Activated B cell treated with CpG ODN at 0.5 μM for 24 hours (primary cell): ENCODE measurements at regions of chr9 and their contacts with region 1.

Region 1: GRCh38 chr9:71628247-71628646 is 140.1 kb downstream of the CEMIP2 start:
- DNase-seq: no peak
- ATAC-seq: no peak
- H3K4me3 Mint-ChIP-seq: no peak overlapping the region
- H3K27ac Mint-ChIP-seq: no peak overlapping the region
- H3K4me1 Mint-ChIP-seq: no peaks in the 10 kb centered on the region
- H3K27me3 Mint-ChIP-seq: peaks cover 4% of the 10 kb centered on the region
- CTCF ChIP-seq: no peak

Region 2: GRCh38 chr9:71703172-71703872 is 75.1 kb after region 1 on chr9:
- CTCF ChIA-PET with region 1: no interaction called
- POLR2A ChIA-PET with region 1: no interaction called
- intact Hi-C with region 1: loop called (anchors 5 kb)
- DNase-seq: no peak
- ATAC-seq: no peak
- H3K4me3 Mint-ChIP-seq: no peak overlapping the region
- H3K27ac Mint-ChIP-seq: no peak overlapping the region
- H3K4me1 Mint-ChIP-seq: no peaks in the 10 kb centered on the region
- H3K27me3 Mint-ChIP-seq: no peaks in the 10 kb centered on the region
- CTCF ChIP-seq: no peak

Region 3: DNA sequence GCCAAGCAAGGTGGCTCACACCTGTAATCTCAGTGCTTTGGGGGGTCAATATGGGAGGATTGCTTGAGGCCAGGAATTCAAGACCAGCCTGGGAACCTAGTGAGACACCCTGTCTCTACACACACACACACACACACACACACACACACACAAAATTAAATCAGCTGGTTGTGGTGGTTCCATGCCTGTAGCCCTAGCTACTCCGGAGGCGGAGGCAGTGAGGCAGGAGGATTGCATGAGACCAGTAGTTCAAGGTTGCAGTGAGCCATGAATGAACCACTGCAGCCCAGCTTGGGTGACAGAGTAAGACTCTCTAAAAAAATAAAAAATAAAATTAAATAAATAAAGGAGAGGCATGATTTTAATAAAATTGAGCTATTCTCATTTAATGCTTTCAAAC is 127.0 kb after region 1 on chr9:
- CTCF ChIA-PET with region 1: no interaction called
- POLR2A ChIA-PET with region 1: interaction called, 10 read pairs
- intact Hi-C with region 1: no loop called
- DNase-seq: no peak
- ATAC-seq: no peak
- H3K4me3 Mint-ChIP-seq: no peak overlapping the region
- H3K27ac Mint-ChIP-seq: no peak overlapping the region
- H3K4me1 Mint-ChIP-seq: peaks cover 51% of the 10 kb centered on the region
- H3K27me3 Mint-ChIP-seq: no peaks in the 10 kb centered on the region
- CTCF ChIP-seq: no peak